ENCODE measurements at regions of chr9 and their contacts with region 1.

Region 1: DNA sequence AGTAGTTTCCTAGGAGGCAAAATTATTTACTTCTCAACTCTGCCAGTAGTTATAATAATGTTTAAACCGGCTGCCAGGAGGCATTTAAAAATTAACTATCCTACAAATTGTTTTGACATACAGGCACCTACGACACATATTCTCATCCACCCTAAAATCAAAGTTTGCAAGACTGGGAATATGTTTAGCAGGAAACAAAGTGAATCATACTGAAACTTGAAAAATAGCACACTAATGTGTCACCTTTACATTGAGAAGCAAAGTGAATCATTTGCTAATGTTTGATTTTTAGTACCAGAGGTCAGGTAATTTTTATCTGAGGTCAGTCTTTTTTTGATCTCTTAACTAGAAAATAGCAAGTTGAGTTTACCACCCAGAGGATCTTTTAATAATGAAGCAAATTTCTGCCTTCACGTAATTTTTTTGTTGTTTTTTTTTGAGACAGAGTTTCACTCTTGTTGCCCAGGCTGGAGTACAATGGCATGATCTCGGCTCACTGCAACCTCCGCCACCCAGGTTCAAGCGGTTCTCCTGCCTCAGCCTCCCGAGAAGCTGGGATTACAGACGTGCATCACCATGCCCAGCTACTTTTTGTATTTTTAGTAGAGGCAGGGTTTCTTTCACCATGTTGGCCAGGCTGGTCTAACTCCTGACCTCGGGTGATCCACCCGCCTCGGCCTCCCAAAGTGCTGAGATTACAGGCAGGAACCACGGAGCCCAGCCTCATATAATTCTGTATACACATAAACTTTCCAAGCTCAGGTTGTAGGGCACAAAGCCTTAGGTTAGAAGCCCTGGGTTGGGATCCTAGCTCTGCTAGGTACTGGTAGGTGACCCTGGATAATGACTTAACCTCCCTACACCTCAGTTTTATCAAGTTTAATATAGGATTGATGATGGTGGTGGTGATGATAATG is 124.3 kb downstream of the UGCG start:
- DNase-seq: no peak
- H3K4me3 ChIP-seq: no peak overlapping the region
- H3K27ac ChIP-seq: no peak overlapping the region
- H3K4me1 ChIP-seq: no peaks in the 10 kb centered on the region
- H3K27me3 ChIP-seq: no peaks in the 10 kb centered on the region
- CTCF ChIP-seq: no peak
- EP300 ChIP-seq: no peak
- POLR2A ChIP-seq: no peak
- RAD21 ChIP-seq: no peak

Region 2: GRCh38 chr9:111975709-111976108 is 45.2 kb before region 1 on chr9:
- CTCF ChIA-PET with region 1: no interaction called
- POLR2A ChIA-PET with region 1: no interaction called
- DNase-seq: peak; percentile 15 to 52
- H3K4me3 ChIP-seq: no peak overlapping the region
- H3K27ac ChIP-seq: no peak overlapping the region
- H3K4me1 ChIP-seq: no peaks in the 10 kb centered on the region
- H3K27me3 ChIP-seq: no peaks in the 10 kb centered on the region
- CTCF ChIP-seq: peak; percentile 48 to 51 (median 50)
- EP300 ChIP-seq: no peak
- POLR2A ChIP-seq: no peak
- RAD21 ChIP-seq: peak; percentile 70 to 78

Region 3: DNA sequence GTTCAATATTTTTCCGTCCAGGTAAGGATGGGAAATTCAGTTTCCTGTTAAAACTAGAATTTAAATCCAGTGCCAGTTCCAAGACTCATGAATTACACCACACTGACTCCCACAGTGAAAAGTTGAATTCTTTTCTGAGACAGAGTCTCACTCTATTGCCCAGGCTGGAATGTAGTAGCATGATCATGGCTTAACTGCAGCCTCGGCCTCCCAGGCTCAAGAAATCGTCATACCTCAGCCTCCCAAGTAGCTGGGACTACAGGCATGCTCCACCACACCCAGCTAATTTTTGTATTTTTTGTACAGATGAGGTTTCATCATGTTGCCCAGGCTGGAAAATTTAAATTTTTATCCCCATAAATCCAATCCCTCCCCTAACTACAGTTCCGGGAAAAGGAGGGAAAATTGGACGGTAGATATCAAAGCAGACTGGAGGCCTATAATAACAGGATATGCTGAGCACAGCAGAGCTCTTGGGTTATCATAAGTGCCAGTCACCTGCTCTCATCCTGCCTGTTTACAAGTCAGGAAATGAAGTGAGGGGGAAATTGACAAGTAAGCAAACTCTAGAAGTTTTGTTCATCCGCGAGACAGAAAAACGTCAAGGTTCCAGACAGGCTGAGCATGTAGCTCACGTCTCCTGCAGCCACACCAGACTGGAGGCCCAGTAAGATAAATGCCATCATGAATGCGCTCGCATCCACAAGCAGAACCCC is 18.6 kb before region 1 on chr9:
- CTCF ChIA-PET with region 1: interaction called, 11 read pairs
- POLR2A ChIA-PET with region 1: no interaction called
- DNase-seq: no peak
- H3K4me3 ChIP-seq: no peak overlapping the region
- H3K27ac ChIP-seq: no peak overlapping the region
- H3K4me1 ChIP-seq: peaks cover 0 to 4% (median 0%) of the 10 kb centered on the region in 4 experiments; a peak in 1 of 7 replicates
- H3K27me3 ChIP-seq: no peaks in the 10 kb centered on the region
- CTCF ChIP-seq: no peak
- EP300 ChIP-seq: no peak
- POLR2A ChIP-seq: no peak
- RAD21 ChIP-seq: no peak

Region 4: DNA sequence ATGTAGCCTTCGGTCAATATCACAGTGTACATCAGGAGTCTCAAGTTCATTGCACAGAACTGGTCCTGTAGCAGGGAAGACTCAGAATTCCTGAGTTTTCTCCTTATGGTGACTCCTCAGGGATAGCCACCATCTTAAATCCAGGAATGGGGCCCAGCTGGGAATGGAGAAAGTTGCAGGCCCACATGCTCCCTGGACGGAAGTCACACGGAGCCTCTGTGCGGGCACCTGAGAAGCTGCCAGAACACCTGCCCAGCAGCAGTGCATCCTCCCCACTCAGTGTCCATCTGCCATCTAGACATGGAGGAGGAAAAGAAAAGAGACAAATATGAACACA is 20.2 kb after region 1 on chr9:
- CTCF ChIA-PET with region 1: no interaction called
- POLR2A ChIA-PET with region 1: no interaction called
- DNase-seq: no peak
- H3K4me3 ChIP-seq: no peak overlapping the region
- H3K27ac ChIP-seq: no peak overlapping the region
- H3K4me1 ChIP-seq: peaks cover 5 to 18% (median 9%) of the 10 kb centered on the region in 4 experiments
- H3K27me3 ChIP-seq: no peaks in the 10 kb centered on the region
- CTCF ChIP-seq: no peak
- EP300 ChIP-seq: no peak
- POLR2A ChIP-seq: no peak
- RAD21 ChIP-seq: no peak